ENCODE measurements at regions of chr20 and their contacts with region 1.

Region 1: GRCh38 chr20:663315-664090 is 10.5 kb upstream of the SRXN1 start:
- DNase-seq: no peak
- H3K4me3 ChIP-seq: no peak overlapping the region
- CTCF ChIP-seq: no peak
- POLR2A ChIP-seq: no peak

Region 2: GRCh38 chr20:266596-267562 is 396.6 kb before region 1 on chr20:
- intact Hi-C with region 1: no loop called
- DNase-seq: peak; percentile 61 to 96
- H3K4me3 ChIP-seq: no peak overlapping the region
- CTCF ChIP-seq: peak in 1 of 3 donors; percentile 82
- POLR2A ChIP-seq: no peak

Region 3: GRCh38 chr20:635893-636338 is 27.6 kb before region 1 on chr20:
- intact Hi-C with region 1: loop called (anchors 1 kb)
- DNase-seq: no peak
- H3K4me3 ChIP-seq: no peak overlapping the region
- CTCF ChIP-seq: no peak
- POLR2A ChIP-seq: no peak

Region 4: DNA sequence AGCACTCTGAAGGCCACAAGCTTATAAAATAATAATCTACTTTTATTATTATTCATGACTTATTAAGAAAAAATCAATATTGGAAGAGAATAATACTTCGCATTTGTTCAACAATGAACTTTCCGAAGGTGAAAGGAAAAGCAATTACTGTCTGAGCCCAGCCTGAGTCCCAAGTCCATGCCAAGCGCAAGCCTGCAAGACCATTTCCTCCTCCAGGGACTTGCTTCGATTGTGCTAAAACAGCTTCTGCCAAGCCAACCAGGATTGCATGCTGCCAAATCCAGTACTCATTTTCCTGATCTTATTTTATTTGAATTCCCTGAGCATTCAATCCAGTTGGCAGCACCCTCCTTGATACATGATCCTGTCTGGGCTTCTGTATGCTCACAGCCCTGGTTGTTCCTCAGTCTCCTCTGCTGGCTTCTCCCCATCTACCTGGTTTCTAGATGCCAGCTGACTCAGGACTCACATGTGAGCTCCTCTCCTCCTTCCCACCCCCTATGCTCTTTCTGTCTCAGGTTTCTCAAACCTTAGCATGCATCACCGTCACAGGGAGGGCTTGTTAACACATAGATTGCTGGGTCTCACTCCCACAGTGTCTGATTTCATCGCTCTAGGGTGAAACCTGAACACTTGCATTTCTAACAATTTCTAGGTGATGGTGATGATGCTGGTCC is 399.0 kb after region 1 on chr20:
- intact Hi-C with region 1: no loop called
- DNase-seq: no peak
- H3K4me3 ChIP-seq: no peak overlapping the region
- CTCF ChIP-seq: no peak
- POLR2A ChIP-seq: no peak